ENCODE measurements at regions of chr11 and their contacts with region 1.

Region 1: GRCh38 chr11:43895601-43896000 is 15.0 kb downstream of the ALKBH3 start:
- DNase-seq: no peak
- ATAC-seq: no peak
- H3K4me3 ChIP-seq: no peak overlapping the region
- H3K27ac ChIP-seq: no peak overlapping the region
- H3K4me1 ChIP-seq: no peaks in the 10 kb centered on the region
- H3K27me3 ChIP-seq: no peaks in the 10 kb centered on the region
- CTCF ChIP-seq: no peak
- POLR2A ChIP-seq: no peak
- RAD21 ChIP-seq: no peak

Region 2: DNA sequence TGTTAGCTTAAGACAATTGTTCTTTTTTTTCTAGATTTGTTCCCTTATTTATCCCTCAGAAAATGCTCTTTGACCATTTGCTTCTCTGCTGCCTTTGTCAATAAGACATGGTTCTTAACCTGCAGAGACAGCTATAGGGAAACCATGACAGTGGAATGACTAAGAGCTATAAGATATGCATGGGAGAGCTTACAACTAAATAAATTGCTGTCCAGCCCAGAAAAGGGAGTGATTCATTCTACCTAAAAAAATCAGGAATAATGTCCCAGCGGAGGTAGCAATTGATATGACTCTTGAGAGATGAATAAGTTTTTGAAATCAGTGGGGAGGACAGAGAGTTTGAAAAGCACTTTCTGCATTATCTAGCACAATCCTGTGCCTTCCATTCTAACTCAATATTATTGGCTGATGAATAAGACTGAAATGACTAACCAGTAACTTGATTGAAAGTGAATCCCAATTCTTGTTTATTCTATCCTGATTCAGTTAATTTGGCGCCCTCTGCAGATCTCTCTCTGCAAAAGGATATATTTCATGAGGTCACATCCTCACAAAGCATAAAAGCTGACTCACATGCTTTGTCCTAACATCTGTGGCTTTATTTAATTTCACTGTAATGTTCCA is 1264.3 kb before region 1 on chr11:
- CTCF ChIA-PET with region 1: no interaction called
- POLR2A ChIA-PET with region 1: no interaction called
- RAD21 ChIA-PET with region 1: no interaction called
- intact Hi-C with region 1: no loop called
- DNase-seq: no peak
- ATAC-seq: no peak
- H3K4me3 ChIP-seq: no peak overlapping the region
- H3K27ac ChIP-seq: no peak overlapping the region
- H3K4me1 ChIP-seq: no peaks in the 10 kb centered on the region
- H3K27me3 ChIP-seq: no peaks in the 10 kb centered on the region
- CTCF ChIP-seq: 0 out of 6 replicates have a peak, but pooled peaks of 1 of the 3 experiments have one; percentile 12
- POLR2A ChIP-seq: no peak
- RAD21 ChIP-seq: no peak

Region 3: GRCh38 chr11:43880640-43881159 is 14.9 kb before region 1 on chr11 and contains the start of gene ALKBH3:
- CTCF ChIA-PET with region 1: no interaction called
- POLR2A ChIA-PET with region 1: no interaction called
- RAD21 ChIA-PET with region 1: no interaction called
- intact Hi-C with region 1: no loop called
- DNase-seq: peak; percentile 87
- ATAC-seq: peak; percentile 99
- H3K4me3 ChIP-seq: peak within 1 kb of the TSS; percentile 98 to 99
- H3K27ac ChIP-seq: peak within 1 kb of the TSS; percentile 42
- H3K4me1 ChIP-seq: peaks cover 10 to 16% of the 10 kb centered on the region in 2 experiments; a peak in 3 of 4 replicates
- H3K27me3 ChIP-seq: no peaks in the 10 kb centered on the region
- CTCF ChIP-seq: no peak
- POLR2A ChIP-seq: peak; percentile 57
- RAD21 ChIP-seq: no peak
- total RNA-seq, gene ALKBH3: 36.7 TPM

Region 4: DNA sequence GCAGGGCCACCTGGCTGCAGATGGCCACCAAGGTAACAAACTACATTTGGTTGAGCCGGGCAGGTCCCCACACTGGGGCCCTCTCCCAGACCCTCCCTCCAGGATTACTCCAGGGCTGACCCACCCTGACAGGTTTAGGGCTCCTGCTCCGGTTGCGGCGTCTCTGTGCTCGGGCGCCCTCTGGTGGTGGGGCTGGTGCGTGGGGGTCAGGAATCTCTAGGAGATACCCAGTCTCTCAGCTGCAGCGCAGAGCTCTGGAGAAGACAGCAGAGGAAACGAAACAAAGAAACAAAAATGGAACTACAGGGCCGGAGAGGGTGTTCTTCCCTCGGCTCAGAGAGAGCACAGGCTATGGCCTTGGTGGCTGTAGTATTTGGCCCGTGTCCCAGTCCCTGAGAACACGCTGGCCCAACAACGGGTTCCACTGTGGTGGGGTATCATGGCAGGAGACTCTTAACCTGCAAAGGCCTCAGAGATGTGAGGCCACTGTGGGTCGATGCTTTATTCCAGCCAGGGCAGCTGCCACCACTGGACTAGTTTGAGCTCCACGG is 49.2 kb after region 1 on chr11:
- CTCF ChIA-PET with region 1: interaction called, 24 read pairs
- POLR2A ChIA-PET with region 1: no interaction called
- RAD21 ChIA-PET with region 1: no interaction called
- intact Hi-C with region 1: loop called (anchors 1 kb)
- DNase-seq: no peak
- ATAC-seq: peak; percentile 81
- H3K4me3 ChIP-seq: peak overlapping the region; percentile 38 to 55
- H3K27ac ChIP-seq: no peak overlapping the region
- H3K4me1 ChIP-seq: peaks cover 0 to 12% of the 10 kb centered on the region in 2 experiments; a peak in 2 of 4 replicates
- H3K27me3 ChIP-seq: no peaks in the 10 kb centered on the region
- CTCF ChIP-seq: peak; percentile 80 to 99 (median 92)
- POLR2A ChIP-seq: no peak
- RAD21 ChIP-seq: peak; percentile 83

Measured in HCT116 (cell line).